B cell (primary cell): ENCODE measurements at regions of chr3 and their contacts with region 1.

Region 1: DNA sequence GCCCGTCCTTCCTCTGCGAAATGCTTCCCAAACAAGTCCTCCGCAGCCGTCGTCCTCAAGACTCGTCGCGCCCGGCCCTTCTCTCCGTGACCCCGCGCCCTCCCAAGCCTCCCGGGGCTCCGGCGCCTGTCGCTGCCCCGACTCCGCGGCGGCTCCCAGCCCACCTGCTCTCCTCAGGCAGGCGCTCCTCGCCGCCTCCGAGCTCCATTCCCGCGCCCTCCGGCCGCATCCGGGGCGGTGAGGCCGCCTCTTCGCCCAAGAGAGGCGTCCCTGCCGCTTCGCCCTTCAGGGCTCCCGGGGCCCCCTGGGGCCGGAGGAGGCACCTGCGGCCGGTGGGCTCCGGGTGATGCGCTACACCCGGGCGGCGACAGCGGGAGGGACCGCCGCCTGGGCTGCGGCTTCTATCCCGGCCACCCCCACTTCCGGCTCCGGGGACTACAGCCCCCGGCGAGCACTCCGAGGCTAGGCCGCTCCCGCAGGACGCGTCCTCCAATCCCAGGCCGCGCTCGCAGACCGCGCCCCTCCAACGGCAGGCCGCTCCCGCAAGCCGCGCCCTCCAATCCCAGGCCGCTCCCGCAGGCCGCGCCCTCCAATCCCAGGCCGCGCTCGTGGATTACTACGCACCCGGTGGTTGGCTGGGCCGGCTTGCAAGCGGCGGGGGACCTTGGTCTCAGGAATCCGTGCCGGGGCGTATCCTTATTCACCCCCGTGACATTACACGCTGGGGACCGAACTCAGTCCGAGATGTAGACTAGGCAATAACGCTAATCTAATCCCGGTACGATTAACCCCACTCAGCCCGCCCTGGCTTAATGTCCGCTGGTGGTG is at the start of gene RUBCN:
- DNase-seq: peak; percentile 95
- ATAC-seq: peak; percentile 86
- H3K4me3 ChIP-seq: peak within 1 kb of the TSS; percentile 61 to 93 (median 87)
- H3K4me3 Mint-ChIP-seq: peak within 1 kb of the TSS; percentile 100
- H3K27ac ChIP-seq: peak within 1 kb of the TSS; percentile 89 to 95
- H3K27ac Mint-ChIP-seq: peak within 1 kb of the TSS; percentile 99
- H3K4me1 ChIP-seq: peaks cover 47 to 51% of the 10 kb centered on the region in 2 donors
- H3K4me1 Mint-ChIP-seq: peaks cover 50% of the 10 kb centered on the region
- H3K27me3 ChIP-seq: no peaks in the 10 kb centered on the region
- H3K27me3 Mint-ChIP-seq: no peaks in the 10 kb centered on the region
- CTCF ChIP-seq: no peak
- total RNA-seq, gene RUBCN: 423 and 427 TPM in 2 replicates

Region 2: GRCh38 chr3:197298341-197298857 is 438.3 kb before region 1 on chr3 and contains the start of gene DLG1:
- CTCF ChIA-PET with region 1: no interaction called
- POLR2A ChIA-PET with region 1: no interaction called
- intact Hi-C with region 1: loop called (anchors 2 kb)
- DNase-seq: peak; percentile 86
- ATAC-seq: peak; percentile 67
- H3K4me3 ChIP-seq: peak within 1 kb of the TSS; percentile 82 to 97 (median 95)
- H3K4me3 Mint-ChIP-seq: peak within 1 kb of the TSS; percentile 97
- H3K27ac ChIP-seq: peak within 1 kb of the TSS; percentile 69 to 79
- H3K27ac Mint-ChIP-seq: peak within 1 kb of the TSS; percentile 95
- H3K4me1 ChIP-seq: peaks cover 15 to 21% of the 10 kb centered on the region in 2 donors
- H3K4me1 Mint-ChIP-seq: peaks cover 26% of the 10 kb centered on the region
- H3K27me3 ChIP-seq: peaks cover 0 to 19% (median 11%) of the 10 kb centered on the region in 4 experiments
- H3K27me3 Mint-ChIP-seq: peaks cover 26% of the 10 kb centered on the region
- CTCF ChIP-seq: no peak
- total RNA-seq, gene DLG1: 114 and 117 TPM in 2 replicates

Region 3: GRCh38 chr3:197674741-197675562 is 61.8 kb before region 1 on chr3:
- CTCF ChIA-PET with region 1: interaction called, 3 read pairs
- POLR2A ChIA-PET with region 1: interaction called, 4 read pairs
- intact Hi-C with region 1: loop called (anchors 1 kb)
- DNase-seq: peak; percentile 80
- ATAC-seq: peak; percentile 91
- H3K4me3 ChIP-seq: no peak overlapping the region
- H3K4me3 Mint-ChIP-seq: peak overlapping the region; percentile 89
- H3K27ac ChIP-seq: peak overlapping the region; percentile 73
- H3K27ac Mint-ChIP-seq: peak overlapping the region; percentile 96
- H3K4me1 ChIP-seq: peaks cover 3 to 21% of the 10 kb centered on the region in 2 donors
- H3K4me1 Mint-ChIP-seq: peaks cover 47% of the 10 kb centered on the region
- H3K27me3 ChIP-seq: no peaks in the 10 kb centered on the region
- H3K27me3 Mint-ChIP-seq: no peaks in the 10 kb centered on the region
- CTCF ChIP-seq: no peak

Region 4: GRCh38 chr3:197718880-197719279 is 17.8 kb before region 1 on chr3:
- CTCF ChIA-PET with region 1: interaction called, 26 read pairs
- POLR2A ChIA-PET with region 1: interaction called, 5 read pairs
- intact Hi-C with region 1: loop called (anchors 1 kb)
- DNase-seq: no peak
- ATAC-seq: no peak
- H3K4me3 ChIP-seq: no peak overlapping the region
- H3K4me3 Mint-ChIP-seq: no peak overlapping the region
- H3K27ac ChIP-seq: no peak overlapping the region
- H3K27ac Mint-ChIP-seq: no peak overlapping the region
- H3K4me1 ChIP-seq: peaks cover 8 to 9% of the 10 kb centered on the region in 2 donors
- H3K4me1 Mint-ChIP-seq: peaks cover 49% of the 10 kb centered on the region
- H3K27me3 ChIP-seq: no peaks in the 10 kb centered on the region
- H3K27me3 Mint-ChIP-seq: no peaks in the 10 kb centered on the region
- CTCF ChIP-seq: no peak

Region 5: DNA sequence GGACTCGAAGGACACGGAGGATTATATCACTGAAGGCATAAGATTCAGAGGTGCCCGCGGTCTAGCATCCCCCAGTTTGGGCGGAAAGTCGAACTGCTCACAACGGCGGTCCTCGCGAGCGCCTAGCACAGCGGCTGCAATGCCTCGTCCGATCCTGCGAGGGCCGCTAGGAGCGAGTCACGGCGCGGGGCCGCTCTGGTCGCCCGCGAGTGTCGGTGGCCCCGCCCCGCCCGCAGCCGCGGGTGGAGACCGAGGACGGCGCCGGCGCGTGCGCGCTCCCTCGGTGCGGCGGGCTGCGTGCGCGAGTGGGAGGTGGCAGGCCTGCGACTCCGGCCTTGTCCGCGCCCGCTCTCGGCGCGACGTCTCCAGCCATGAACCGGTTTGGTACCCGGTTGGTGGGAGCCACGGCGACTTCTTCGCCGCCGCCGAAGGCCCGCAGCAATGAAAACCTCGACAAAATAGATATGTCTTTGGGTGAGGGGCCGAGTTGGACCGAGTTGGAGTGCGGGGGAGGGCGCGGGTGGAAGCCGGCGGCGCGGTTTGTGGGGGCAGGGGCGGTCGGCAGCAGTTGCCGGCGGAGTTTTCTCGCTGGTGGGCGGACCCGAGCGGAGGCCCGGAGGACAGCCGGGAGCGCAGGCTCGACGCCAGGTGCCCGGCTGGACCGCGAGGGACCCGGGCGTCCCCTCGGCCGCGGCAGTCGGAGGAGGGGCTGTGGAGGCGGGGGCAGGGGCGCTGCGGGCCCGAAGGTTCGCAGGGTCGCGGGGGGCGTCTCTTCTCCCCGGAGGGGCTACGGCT is 13.1 kb after region 1 on chr3 and contains the start of gene FYTTD1:
- CTCF ChIA-PET with region 1: interaction called, 11 read pairs
- POLR2A ChIA-PET with region 1: interaction called, 12 read pairs
- intact Hi-C with region 1: loop called (anchors 1 kb)
- DNase-seq: peak; percentile 95
- ATAC-seq: peak; percentile 90
- H3K4me3 ChIP-seq: peak within 1 kb of the TSS; percentile 76 to 97 (median 83)
- H3K4me3 Mint-ChIP-seq: peak within 1 kb of the TSS; percentile 96
- H3K27ac ChIP-seq: peak within 1 kb of the TSS; percentile 88 to 94
- H3K27ac Mint-ChIP-seq: peak within 1 kb of the TSS; percentile 97
- H3K4me1 ChIP-seq: peaks cover 18 to 26% of the 10 kb centered on the region in 2 donors
- H3K4me1 Mint-ChIP-seq: peaks cover 43% of the 10 kb centered on the region
- H3K27me3 ChIP-seq: no peaks in the 10 kb centered on the region
- H3K27me3 Mint-ChIP-seq: no peaks in the 10 kb centered on the region
- CTCF ChIP-seq: peak; percentile 64
- total RNA-seq, gene FYTTD1: 110 and 121 TPM in 2 replicates